ENCODE measurements at regions of chr9 and their contacts with region 1.

Region 1: GRCh38 chr9:93119953-93120845 is 13.9 kb downstream of the NINJ1 start:
- DNase-seq: peak; percentile 55
- H3K4me3 Mint-ChIP-seq: no peak overlapping the region
- H3K27ac Mint-ChIP-seq: peak overlapping the region; percentile 68
- H3K4me1 Mint-ChIP-seq: peaks cover 16% of the 10 kb centered on the region
- H3K27me3 Mint-ChIP-seq: no peaks in the 10 kb centered on the region

Region 2: GRCh38 chr9:93134015-93134739 is 14.0 kb after region 1 on chr9 and contains the start of gene NINJ1:
- CTCF ChIA-PET with region 1: no interaction called
- POLR2A ChIA-PET with region 1: interaction called, 14 read pairs
- DNase-seq: peak; percentile 77
- H3K4me3 Mint-ChIP-seq: peak within 1 kb of the TSS; percentile 84
- H3K27ac Mint-ChIP-seq: peak within 1 kb of the TSS; percentile 73
- H3K4me1 Mint-ChIP-seq: peaks cover 54% of the 10 kb centered on the region
- H3K27me3 Mint-ChIP-seq: no peaks in the 10 kb centered on the region
- total RNA-seq, gene NINJ1: 36.9 to 37.4 TPM

Region 3: DNA sequence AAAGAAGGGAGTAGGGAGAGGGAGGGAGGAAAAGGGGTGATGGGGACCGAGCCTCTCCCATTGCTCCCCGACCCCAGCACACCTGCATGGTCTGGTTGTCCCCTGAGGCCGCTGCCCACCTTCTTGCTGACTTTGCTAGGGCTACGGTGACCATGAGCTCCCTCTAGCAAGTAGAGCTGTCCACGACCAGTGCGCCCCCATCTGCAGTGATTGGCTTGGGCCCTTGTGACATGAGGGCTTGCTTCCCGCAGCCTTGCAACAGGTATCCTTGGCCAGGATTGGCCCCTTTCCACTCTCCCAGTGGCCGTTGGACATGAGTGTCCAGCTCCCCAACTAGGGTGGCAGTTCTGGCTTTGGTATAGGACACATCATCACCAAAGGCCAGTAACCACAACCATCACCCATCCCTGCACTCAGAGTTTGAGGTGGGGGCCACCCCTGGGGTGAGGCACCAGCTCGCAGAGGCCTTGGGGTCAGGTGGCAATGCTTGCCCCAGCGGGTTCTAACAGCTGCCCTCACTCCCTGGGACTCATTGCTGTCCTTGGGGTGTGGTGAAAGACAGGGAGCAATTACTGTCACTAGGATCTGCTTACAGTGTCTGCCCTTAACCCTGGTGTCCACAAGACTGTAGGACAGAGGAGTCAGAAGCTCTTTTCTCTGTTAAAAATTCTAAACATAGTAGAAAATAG is 31.0 kb after region 1 on chr9:
- CTCF ChIA-PET with region 1: no interaction called
- POLR2A ChIA-PET with region 1: no interaction called
- DNase-seq: no peak
- H3K4me3 Mint-ChIP-seq: no peak overlapping the region
- H3K27ac Mint-ChIP-seq: no peak overlapping the region
- H3K4me1 Mint-ChIP-seq: peaks cover 45% of the 10 kb centered on the region
- H3K27me3 Mint-ChIP-seq: no peaks in the 10 kb centered on the region